Activated CD8-positive, alpha-beta memory T cell treated with anti-CD3 and anti-CD28 coated beads, Interleukin-2, amount 10 ng/mL, durations not matched to agents 7 days and 5 days (primary cell): ENCODE measurements at regions of chr19 and their contacts with region 1.

Region 1: GRCh38 chr19:5048091-5048726 is 79.3 kb downstream of the KDM4B start:
- DNase-seq: peak; percentile 62
- ATAC-seq: peak; percentile 77
- H3K4me3 Mint-ChIP-seq: no peak overlapping the region
- H3K27ac Mint-ChIP-seq: no peak overlapping the region
- H3K4me1 Mint-ChIP-seq: no peaks in the 10 kb centered on the region
- H3K27me3 Mint-ChIP-seq: no peaks in the 10 kb centered on the region

Region 2: DNA sequence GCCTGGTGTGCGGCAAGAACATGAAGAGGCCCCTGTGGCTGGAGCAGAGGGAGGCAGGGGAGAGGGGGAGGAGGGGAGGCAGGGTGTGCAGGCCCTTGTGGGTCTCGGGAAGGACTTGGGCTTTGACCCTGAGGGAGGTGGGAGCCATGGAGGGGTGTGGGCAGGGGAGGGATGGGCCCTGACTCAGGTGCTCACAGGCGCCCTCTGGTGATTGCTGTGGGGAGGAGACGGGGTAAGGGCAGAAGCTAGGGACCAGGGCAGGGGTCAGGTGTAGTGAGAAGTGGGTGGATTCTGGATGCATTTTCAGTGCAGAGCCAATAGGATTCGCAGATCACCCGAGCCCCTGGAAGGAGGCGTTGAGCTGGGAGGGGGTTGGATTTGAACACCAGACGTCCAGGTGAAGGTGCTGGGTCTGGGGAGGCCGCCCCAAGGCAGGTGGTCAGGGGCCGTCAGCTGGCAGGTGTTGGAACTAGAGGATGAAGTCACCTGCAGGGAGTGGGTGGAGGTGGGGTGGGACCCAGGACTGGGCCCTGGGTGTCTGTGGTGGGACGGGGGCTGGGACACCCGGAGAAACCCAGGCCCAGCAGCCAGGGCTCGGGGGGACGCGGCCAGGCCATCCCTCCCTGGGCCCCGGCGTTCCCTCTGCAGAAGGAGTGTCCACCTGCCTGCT is 106.1 kb after region 1 on chr19:
- CTCF ChIA-PET with region 1: interaction called, 15 read pairs
- DNase-seq: no peak
- ATAC-seq: peak; percentile 38
- H3K4me3 Mint-ChIP-seq: no peak overlapping the region
- H3K27ac Mint-ChIP-seq: no peak overlapping the region
- H3K4me1 Mint-ChIP-seq: no peaks in the 10 kb centered on the region
- H3K27me3 Mint-ChIP-seq: no peaks in the 10 kb centered on the region

Region 3: GRCh38 chr19:5261188-5261890 is 213.1 kb after region 1 on chr19:
- CTCF ChIA-PET with region 1: no interaction called
- DNase-seq: no peak
- ATAC-seq: no peak
- H3K4me3 Mint-ChIP-seq: no peak overlapping the region
- H3K27ac Mint-ChIP-seq: no peak overlapping the region
- H3K4me1 Mint-ChIP-seq: no peaks in the 10 kb centered on the region
- H3K27me3 Mint-ChIP-seq: no peaks in the 10 kb centered on the region